ENCODE measurements at regions of chr1 and their contacts with region 1.

Region 1: GRCh38 chr1:46333300-46334029 is 7.1 kb upstream of the NSUN4 start:
- DNase-seq: peak; percentile 48 to 76
- H3K4me3 ChIP-seq: no peak overlapping the region
- H3K27ac ChIP-seq: no peak overlapping the region
- H3K4me1 ChIP-seq: peaks cover 2% of the 10 kb centered on the region; the same call in 1 of the 2 replicates
- H3K27me3 ChIP-seq: no peaks in the 10 kb centered on the region
- CTCF ChIP-seq: peak; percentile 54

Region 2: GRCh38 chr1:45512641-45513054 is 820.8 kb before region 1 on chr1:
- CTCF ChIA-PET with region 1: no interaction called
- POLR2A ChIA-PET with region 1: interaction called, 10 read pairs
- intact Hi-C with region 1: no loop called
- DNase-seq: peak; percentile 55 to 61
- H3K4me3 ChIP-seq: no peak overlapping the region
- H3K27ac ChIP-seq: no peak overlapping the region
- H3K4me1 ChIP-seq: peaks cover 20% of the 10 kb centered on the region
- H3K27me3 ChIP-seq: no peaks in the 10 kb centered on the region
- CTCF ChIP-seq: peak; percentile 80

Region 3: DNA sequence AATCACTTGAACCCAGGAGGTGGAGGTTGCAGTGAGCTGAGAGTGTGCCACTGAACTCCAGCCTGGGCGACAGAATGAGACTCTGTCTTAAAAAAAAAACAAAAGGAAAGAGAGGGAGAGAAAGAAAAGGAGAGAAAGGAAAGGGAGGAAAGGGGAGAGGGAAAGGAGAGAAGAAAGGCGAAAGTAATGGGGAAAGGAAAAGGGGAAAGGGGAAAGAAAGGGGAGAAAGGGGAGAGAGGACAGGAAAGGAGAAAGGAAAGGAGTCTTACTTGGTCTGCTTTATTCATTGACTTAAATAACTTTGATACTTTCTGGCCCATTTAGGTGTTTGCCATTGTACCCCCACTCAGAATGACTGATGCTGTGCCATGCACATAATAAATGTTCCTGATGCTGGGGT is 18.9 kb after region 1 on chr1:
- CTCF ChIA-PET with region 1: interaction called, 24 read pairs
- POLR2A ChIA-PET with region 1: interaction called, 3 read pairs
- intact Hi-C with region 1: loop called (anchors 1 kb)
- DNase-seq: no peak
- H3K4me3 ChIP-seq: no peak overlapping the region
- H3K27ac ChIP-seq: no peak overlapping the region
- H3K4me1 ChIP-seq: 0 out of 2 replicates have a peak, but pooled peaks cover 4% of the 10 kb centered on the region
- H3K27me3 ChIP-seq: no peaks in the 10 kb centered on the region
- CTCF ChIP-seq: no peak

Region 4: GRCh38 chr1:46370214-46370633 is 36.8 kb after region 1 on chr1:
- CTCF ChIA-PET with region 1: no interaction called
- POLR2A ChIA-PET with region 1: no interaction called
- intact Hi-C with region 1: no loop called
- DNase-seq: no peak
- H3K4me3 ChIP-seq: no peak overlapping the region
- H3K27ac ChIP-seq: no peak overlapping the region
- H3K4me1 ChIP-seq: no peaks in the 10 kb centered on the region
- H3K27me3 ChIP-seq: no peaks in the 10 kb centered on the region
- CTCF ChIP-seq: no peak

Region 5: DNA sequence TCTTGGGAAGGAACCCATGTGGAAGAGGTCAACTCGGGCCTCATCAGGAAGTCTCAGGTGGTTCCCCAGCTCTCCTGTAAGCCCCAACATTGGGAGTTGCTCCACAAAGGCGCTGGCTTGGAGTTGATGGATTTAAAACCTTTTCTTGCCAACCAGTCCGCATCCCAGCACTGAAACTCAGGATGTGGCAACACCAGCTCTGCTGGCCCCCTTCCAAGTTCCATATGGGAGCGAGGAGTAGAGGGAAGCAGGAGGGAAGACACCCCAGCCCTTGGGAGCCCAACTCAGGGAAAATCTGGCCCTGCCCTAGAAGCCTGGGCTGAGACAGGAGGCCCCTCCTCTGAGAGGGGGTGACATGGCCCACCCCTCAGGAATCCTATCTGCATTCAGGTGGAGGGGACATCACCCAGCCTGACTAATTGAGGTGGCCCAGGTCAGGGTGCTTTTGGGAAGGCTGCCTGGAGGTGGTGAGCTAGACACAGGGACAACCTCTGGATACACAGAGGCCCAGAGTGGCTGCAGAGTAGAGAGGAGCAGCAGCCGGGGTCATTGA is 123.0 kb after region 1 on chr1:
- CTCF ChIA-PET with region 1: no interaction called
- POLR2A ChIA-PET with region 1: no interaction called
- intact Hi-C with region 1: no loop called
- DNase-seq: no peak
- H3K4me3 ChIP-seq: no peak overlapping the region
- H3K27ac ChIP-seq: no peak overlapping the region
- H3K4me1 ChIP-seq: no peaks in the 10 kb centered on the region
- H3K27me3 ChIP-seq: peaks cover 41% of the 10 kb centered on the region
- CTCF ChIP-seq: no peak

Region 6: DNA sequence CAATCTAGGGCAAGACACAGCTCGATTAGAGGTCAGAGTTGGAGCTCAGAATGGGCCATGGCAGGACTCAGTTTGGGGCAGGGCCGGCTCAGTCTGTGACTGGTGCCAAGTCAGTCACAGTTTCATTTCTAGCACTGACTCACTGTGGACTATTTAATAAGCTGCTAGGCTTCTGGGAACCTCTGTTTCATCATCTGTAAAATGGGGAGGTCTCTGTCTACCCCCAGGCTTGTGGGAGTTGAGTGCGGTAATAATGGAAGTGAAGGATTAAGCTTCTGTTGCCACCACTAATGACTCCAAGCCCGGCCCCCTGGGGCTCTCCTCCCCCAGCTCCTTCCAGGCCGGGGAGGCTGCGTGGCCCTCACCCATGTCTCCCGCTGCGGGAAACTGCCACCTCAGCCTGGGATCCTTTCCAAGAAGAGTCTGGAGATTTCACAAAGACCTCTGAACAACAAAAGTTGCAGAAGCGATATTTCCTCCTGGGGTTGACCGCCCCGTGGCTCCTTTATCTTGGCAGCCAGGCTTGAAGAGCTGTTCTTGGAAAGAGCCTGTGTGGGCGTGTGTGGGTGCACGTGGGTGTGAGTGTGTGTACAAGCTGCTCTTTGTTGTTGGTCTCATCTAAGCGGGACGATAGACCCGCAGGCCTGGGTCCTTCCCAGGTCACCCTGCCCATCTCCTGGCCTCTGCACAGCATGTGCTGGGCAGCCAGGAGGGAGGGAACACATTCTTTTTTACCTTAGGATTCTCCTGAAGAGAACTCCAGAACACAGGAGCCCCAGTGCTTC is 188.9 kb after region 1 on chr1:
- CTCF ChIA-PET with region 1: no interaction called
- POLR2A ChIA-PET with region 1: no interaction called
- intact Hi-C with region 1: loop called (anchors 5 kb)
- DNase-seq: peak; percentile 81 to 85
- H3K4me3 ChIP-seq: no peak overlapping the region; the same call in 1 of the 2 replicates
- H3K27ac ChIP-seq: peak overlapping the region; percentile 65
- H3K4me1 ChIP-seq: peaks cover 65% of the 10 kb centered on the region
- H3K27me3 ChIP-seq: no peaks in the 10 kb centered on the region
- CTCF ChIP-seq: no peak

Measured in PC-9 (cell line).